ENCODE measurements at regions of chr2 and their contacts with region 1.

Region 1: DNA sequence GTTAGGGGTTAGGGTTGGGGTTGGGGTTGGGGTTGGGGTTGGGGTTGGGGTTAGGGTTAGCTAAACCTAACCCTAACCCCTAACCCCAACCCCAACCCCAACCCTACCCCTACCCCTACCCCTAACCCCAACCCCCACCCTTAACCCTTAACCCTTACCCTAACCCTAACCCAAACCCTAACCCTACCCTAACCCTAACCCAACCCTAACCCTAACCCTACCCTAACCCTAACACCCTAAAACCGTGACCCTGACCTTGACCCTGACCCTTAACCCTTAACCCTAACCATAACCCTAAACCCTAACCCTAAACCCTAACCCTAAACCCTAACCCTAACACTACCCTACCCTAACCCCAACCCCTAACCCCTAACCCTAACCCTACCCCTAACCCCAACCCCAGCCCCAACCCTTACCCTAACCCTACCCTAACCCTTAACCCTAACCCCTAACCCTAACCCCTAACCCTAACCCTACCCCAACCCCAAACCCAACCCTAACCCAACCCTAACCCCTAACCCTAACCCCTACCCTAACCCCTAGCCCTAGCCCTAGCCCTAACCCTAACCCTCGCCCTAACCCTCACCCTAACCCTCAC is 24.1 kb upstream of the RABL2A start:
- DNase-seq: no peak
- H3K4me3 Mint-ChIP-seq: peak overlapping the region; percentile 80
- H3K27ac Mint-ChIP-seq: no peak overlapping the region
- H3K4me1 Mint-ChIP-seq: peaks cover 5% of the 10 kb centered on the region
- H3K27me3 Mint-ChIP-seq: peaks cover 3% of the 10 kb centered on the region

Region 2: DNA sequence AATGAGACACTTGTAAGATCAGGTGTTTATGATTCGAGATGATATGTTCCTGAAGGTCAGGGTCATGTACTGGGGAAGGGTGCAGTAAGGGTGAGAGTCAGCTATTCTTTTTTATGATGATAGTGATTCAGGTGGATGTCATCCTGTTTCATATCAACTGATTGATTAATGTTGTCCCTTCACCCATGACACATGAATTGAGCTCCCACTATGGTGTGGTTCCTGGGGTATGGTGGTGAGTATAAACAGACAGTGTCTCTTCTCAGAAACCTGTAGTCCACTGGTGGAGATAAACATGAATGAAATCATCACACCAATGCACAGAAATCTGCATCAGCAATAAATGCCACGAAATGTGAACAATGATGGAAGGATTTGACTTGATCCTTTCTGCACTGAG is 286.9 kb before region 1 on chr2:
- intact Hi-C with region 1: no loop called
- DNase-seq: no peak
- H3K4me3 Mint-ChIP-seq: no peak overlapping the region
- H3K27ac Mint-ChIP-seq: no peak overlapping the region
- H3K4me1 Mint-ChIP-seq: no peaks in the 10 kb centered on the region
- H3K27me3 Mint-ChIP-seq: peaks cover 34% of the 10 kb centered on the region

Region 3: DNA sequence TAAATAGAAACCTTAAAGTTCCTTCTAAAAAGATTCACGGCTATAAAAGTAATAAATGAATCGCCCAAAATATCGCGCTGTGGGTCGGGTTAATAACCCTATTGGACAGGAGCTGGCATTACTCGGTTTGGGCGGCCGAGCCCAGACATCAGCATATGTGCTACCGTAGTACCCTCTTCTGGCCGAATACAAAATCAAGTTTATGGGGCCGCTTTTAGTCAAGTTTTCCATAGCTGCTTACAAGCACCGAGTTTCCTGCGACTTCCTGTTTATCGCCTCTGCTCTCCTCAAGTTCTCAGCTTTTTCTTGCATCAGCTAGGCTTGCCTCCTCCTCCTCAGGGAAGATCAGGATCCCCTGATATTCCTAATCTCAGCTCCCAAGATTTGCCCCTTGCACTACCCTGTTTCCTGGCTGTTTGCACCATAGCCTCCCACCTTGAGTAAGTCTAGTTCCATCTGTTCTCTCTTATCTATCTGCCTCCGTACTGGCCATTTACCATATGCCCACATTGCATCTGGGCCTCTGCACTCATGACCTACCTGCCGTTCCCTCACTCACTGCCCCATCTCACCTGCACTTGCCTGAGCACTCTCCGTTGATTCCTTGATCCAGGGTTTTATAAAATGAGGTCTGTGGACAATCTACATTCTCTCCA is 97.3 kb after region 1 on chr2:
- intact Hi-C with region 1: loop called (anchors 5 kb)
- DNase-seq: peak; percentile 19
- H3K4me3 Mint-ChIP-seq: peak overlapping the region; percentile 70
- H3K27ac Mint-ChIP-seq: peak overlapping the region; percentile 82
- H3K4me1 Mint-ChIP-seq: peaks cover 19% of the 10 kb centered on the region
- H3K27me3 Mint-ChIP-seq: no peaks in the 10 kb centered on the region